AG04450 (cell line): ENCODE measurements at regions of chr6 and their contacts with region 1.

Region 1: GRCh38 chr6:109187399-109188114 is 92.2 kb downstream of the CEP57L1 start:
- DNase-seq: no peak
- H3K4me3 ChIP-seq: no peak overlapping the region
- H3K27ac ChIP-seq: no peak overlapping the region
- H3K27me3 ChIP-seq: peaks cover 26% of the 10 kb centered on the region
- CTCF ChIP-seq: peak; percentile 96

Region 2: GRCh38 chr6:109170333-109170732 is 17.2 kb before region 1 on chr6:
- CTCF ChIA-PET with region 1: interaction called, 11 read pairs
- POLR2A ChIA-PET with region 1: no interaction called
- DNase-seq: no peak
- H3K4me3 ChIP-seq: no peak overlapping the region
- H3K27ac ChIP-seq: no peak overlapping the region
- H3K27me3 ChIP-seq: no peaks in the 10 kb centered on the region
- CTCF ChIP-seq: no peak

Region 3: GRCh38 chr6:109336221-109336961 is 148.8 kb after region 1 on chr6:
- CTCF ChIA-PET with region 1: no interaction called
- POLR2A ChIA-PET with region 1: no interaction called
- DNase-seq: no peak
- H3K4me3 ChIP-seq: no peak overlapping the region
- H3K27ac ChIP-seq: no peak overlapping the region
- H3K27me3 ChIP-seq: no peaks in the 10 kb centered on the region
- CTCF ChIP-seq: no peak

Region 4: DNA sequence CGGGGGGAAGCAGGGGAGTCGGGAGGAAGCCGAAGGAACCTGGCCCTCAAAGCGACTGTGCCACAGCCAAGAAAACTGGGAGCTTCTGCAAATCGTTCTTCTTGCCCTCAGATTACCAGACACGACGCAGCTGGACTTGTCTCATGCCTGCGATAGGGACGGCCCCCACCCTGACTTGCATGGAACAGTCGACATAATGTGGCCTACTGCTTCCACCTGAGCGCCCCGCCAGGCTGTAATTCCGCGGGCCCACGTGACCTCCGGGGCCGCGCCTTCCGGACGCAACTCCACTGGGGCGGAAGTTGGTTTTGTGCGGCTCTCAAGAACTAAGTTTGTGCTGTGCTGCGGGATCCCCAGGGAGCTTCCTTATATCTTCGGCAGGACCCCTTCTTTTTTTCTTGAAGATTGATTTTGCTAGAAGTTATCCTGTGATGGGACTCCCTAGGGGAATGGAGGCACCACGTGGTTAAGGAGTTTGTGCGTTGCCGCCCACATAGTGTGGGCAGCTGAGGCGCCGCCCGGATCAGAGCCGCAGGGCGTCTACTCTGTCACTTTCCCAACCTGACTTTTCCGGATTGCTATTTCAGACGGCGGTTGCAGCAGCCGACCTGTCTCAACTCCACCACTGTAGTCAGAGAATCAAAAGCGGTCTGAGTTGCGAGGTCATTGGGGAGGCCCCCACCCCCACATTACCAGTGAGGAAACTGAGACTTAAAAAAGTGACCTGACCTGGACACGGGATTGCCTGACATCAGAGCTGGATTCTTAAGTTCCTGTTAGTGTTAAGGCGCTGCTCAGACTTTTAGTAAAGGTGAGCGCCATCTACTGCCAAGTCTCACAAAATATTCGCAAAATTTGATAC is 195.2 kb after region 1 on chr6:
- CTCF ChIA-PET with region 1: interaction called, 47 read pairs
- POLR2A ChIA-PET with region 1: no interaction called
- DNase-seq: peak; percentile 87
- H3K4me3 ChIP-seq: peak overlapping the region; percentile 98
- H3K27ac ChIP-seq: peak overlapping the region; percentile 99
- H3K27me3 ChIP-seq: peaks cover 3% of the 10 kb centered on the region
- CTCF ChIP-seq: peak; percentile 53

Region 5: DNA sequence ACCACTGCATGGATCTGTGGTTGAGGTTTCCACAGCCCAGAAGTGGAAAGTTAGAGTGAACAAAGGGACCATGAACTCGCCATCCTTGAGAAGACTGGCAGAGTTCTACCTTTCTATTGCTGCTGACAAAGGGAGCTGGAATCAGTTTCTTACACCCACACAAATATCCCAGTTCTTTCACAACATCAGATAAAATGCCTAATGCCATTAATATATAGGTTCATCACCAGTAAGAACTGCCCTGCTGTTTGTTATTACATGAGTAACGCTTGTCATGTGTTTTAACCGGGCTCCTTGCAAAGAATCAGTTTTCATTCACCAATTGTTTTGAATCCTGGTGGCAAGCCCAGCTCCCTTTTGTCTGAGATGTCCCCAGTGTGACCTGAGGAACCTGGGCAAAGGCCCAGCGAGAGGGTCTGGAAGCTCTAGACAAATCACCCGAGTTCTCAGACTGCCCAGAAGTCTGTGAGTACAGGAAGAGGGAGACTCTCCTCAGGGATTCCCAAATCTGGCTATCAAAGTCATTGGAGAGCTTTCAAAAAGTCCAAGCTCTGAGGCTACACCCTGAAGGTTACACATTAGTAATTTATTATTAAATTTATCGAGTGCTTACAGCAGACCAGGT is 202.2 kb after region 1 on chr6:
- CTCF ChIA-PET with region 1: interaction called, 47 read pairs
- POLR2A ChIA-PET with region 1: interaction called, 5 read pairs
- DNase-seq: no peak
- H3K4me3 ChIP-seq: no peak overlapping the region
- H3K27ac ChIP-seq: no peak overlapping the region
- H3K27me3 ChIP-seq: peaks cover 7% of the 10 kb centered on the region
- CTCF ChIP-seq: no peak

Region 6: GRCh38 chr6:109397020-109397419 is 209.5 kb after region 1 on chr6:
- CTCF ChIA-PET with region 1: interaction called, 26 read pairs
- POLR2A ChIA-PET with region 1: no interaction called
- DNase-seq: no peak
- H3K4me3 ChIP-seq: no peak overlapping the region
- H3K27ac ChIP-seq: no peak overlapping the region
- H3K27me3 ChIP-seq: peaks cover 7% of the 10 kb centered on the region
- CTCF ChIP-seq: peak; percentile 64